Caco-2 (cell line): ENCODE measurements at regions of chr6 and their contacts with region 1.

Region 1: DNA sequence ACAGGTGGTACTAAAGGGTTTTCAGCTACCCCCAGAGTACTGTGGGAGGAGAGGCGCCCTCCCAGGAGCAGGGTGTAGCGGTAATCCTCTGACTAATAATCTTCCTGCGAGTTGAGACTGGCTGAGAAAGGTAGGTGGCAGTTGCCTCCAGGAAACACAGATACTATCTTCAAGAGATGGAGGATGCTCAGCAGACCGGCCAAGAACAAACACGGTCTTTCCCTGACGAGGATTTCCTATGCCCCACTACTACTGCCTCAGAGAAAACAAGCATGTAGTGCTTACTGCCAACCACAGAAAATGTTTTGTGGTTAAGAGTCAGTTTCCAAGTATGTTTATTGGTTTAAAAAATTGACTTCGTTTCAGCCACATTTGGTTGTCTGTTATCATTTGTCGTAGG is 26.8 kb downstream of the C6orf89 start:
- DNase-seq: no peak
- H3K4me3 ChIP-seq: no peak overlapping the region
- H3K4me3 Mint-ChIP-seq: no peak overlapping the region
- H3K27ac Mint-ChIP-seq: no peak overlapping the region
- H3K4me1 ChIP-seq: peaks cover 16% of the 10 kb centered on the region
- H3K4me1 Mint-ChIP-seq: peaks cover 7% of the 10 kb centered on the region
- H3K27me3 ChIP-seq: no peaks in the 10 kb centered on the region
- H3K27me3 Mint-ChIP-seq: no peaks in the 10 kb centered on the region
- CTCF ChIP-seq: no peak

Region 2: GRCh38 chr6:36765594-36766398 is 146.8 kb before region 1 on chr6:
- CTCF ChIA-PET with region 1: interaction called, 12 read pairs
- POLR2A ChIA-PET with region 1: no interaction called
- intact Hi-C with region 1: loop called (anchors 1 kb)
- DNase-seq: peak; percentile 77 to 85
- H3K4me3 ChIP-seq: no peak overlapping the region
- H3K4me3 Mint-ChIP-seq: no peak overlapping the region
- H3K27ac Mint-ChIP-seq: no peak overlapping the region
- H3K4me1 ChIP-seq: no peaks in the 10 kb centered on the region
- H3K4me1 Mint-ChIP-seq: no peaks in the 10 kb centered on the region
- H3K27me3 ChIP-seq: no peaks in the 10 kb centered on the region
- H3K27me3 Mint-ChIP-seq: no peaks in the 10 kb centered on the region
- CTCF ChIP-seq: peak; percentile 86 to 93

Region 3: DNA sequence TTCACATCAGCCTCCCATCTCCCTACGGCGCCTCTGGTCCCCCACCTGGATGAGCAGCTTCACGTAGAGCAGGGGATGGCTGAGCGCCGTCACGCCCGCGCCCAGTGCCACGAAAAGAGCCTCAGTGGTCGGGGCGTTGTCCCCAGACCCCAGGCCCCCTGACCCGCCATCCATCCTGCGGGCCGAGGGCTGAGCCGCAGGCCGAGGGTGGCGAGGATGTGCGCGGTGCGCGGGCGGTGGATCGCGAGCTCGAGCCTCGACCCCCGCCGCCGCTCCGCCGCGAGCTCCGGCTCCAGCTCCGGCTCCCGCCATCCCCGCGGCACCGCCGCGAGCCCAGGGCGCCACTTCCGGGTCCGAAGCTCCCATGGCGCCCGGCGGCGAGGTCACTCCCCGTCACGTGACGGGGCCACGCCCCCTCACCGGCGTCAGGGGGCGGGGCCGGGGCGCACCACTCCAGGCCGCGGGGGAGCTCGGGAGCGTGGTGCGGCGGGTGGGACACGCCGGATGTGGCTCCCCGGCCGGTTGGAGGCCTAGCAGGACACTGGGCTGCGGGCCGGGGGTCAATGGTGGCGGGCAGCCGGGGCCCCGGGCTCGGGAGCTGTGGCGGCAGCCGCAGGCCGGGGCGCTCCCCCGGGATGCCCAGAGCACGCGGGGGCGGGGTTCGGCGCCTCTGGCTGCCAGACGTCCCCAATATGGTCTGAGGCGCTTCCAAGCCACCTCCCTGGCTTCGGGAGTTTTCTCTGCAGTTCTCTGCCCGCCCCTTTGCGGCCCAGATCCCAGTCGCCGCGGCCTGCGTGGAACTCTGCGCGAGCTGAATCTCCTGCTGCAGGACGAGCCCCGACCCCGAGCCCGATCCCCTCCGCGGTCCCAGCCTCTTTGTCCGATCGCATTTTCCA is 73.5 kb after region 1 on chr6 and contains the start of gene MTCH1:
- CTCF ChIA-PET with region 1: no interaction called
- POLR2A ChIA-PET with region 1: interaction called, 13 read pairs
- intact Hi-C with region 1: no loop called
- DNase-seq: peak; percentile 84 to 93
- H3K4me3 ChIP-seq: peak within 1 kb of the TSS; percentile 98
- H3K4me3 Mint-ChIP-seq: no peak within 1 kb of the TSS
- H3K27ac Mint-ChIP-seq: peak within 1 kb of the TSS; percentile 94
- H3K4me1 ChIP-seq: peaks cover 6% of the 10 kb centered on the region; the same call in 1 of the 2 replicates
- H3K4me1 Mint-ChIP-seq: peaks cover 12% of the 10 kb centered on the region
- H3K27me3 ChIP-seq: no peaks in the 10 kb centered on the region
- H3K27me3 Mint-ChIP-seq: no peaks in the 10 kb centered on the region
- CTCF ChIP-seq: no peak
- total RNA-seq, gene MTCH1: 170 and 178 TPM in 2 replicates